ENCODE measurements at regions of chr1 and their contacts with region 1.

Region 1: DNA sequence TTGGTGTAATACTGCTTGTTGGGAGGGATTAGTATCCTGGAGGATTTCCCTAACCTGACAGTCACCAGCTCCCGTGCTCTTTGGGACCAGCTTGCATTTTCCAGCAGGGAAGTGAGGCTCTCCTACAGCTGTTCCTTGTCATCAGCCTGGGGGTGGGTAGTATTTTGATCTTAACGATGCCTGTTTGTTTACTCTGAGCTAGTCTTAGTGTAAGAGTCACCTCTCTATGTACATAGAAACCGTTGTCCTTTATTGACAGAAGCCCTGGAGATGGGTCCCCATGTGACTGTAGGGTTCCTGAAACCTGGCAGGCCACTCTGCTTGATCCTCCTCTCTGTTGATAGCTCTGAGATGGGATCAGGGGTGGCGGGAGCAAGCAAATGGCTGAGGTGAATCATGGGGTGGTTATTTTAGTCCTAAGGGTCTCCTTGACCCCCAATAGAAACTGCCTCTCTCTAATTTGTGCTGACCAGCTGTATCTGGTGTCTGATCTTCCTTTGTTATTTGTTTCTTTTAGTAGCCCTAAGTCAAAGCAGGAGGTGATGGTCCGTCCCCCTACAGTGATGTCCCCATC is 57.9 kb downstream of the ACP6 start:
- DNase-seq: peak; percentile 59
- H3K4me3 ChIP-seq: no peak overlapping the region
- H3K27ac ChIP-seq: peak overlapping the region; percentile 49 to 50
- H3K4me1 ChIP-seq: peaks cover 3% of the 10 kb centered on the region
- H3K27me3 ChIP-seq: no peaks in the 10 kb centered on the region
- CTCF ChIP-seq: peak in 1 of 4 experiments; percentile 10
- POLR2A ChIP-seq: no peak

Region 2: GRCh38 chr1:147633762-147634161 is 21.3 kb after region 1 on chr1:
- intact Hi-C with region 1: loop called (anchors 1 kb)
- DNase-seq: no peak
- H3K4me3 ChIP-seq: no peak overlapping the region
- H3K27ac ChIP-seq: no peak overlapping the region
- H3K4me1 ChIP-seq: no peaks in the 10 kb centered on the region
- H3K27me3 ChIP-seq: no peaks in the 10 kb centered on the region
- CTCF ChIP-seq: no peak
- POLR2A ChIP-seq: no peak

Region 3: DNA sequence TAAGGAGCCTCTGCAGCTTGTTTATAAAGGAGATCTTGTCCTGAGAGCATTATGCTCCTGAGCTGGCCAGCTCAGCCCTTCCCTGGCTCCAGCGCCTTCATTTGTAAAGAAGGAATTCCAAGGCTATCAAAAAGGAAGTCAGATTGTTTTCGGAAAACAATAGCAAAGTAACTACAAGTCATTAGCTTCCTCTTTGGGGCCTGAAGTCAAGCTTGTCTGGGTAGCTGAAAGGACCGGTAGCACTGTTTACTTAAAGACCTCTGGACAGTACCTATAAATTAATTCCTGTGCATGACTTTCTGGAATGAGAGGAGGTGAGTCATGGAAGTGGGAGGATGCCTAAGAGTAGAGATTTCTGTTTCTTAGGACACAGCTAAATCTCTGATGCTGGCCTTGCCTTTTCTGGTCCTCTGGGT is 168.6 kb after region 1 on chr1:
- intact Hi-C with region 1: no loop called
- DNase-seq: no peak
- H3K4me3 ChIP-seq: no peak overlapping the region
- H3K27ac ChIP-seq: no peak overlapping the region
- H3K4me1 ChIP-seq: no peaks in the 10 kb centered on the region
- H3K27me3 ChIP-seq: no peaks in the 10 kb centered on the region
- CTCF ChIP-seq: no peak
- POLR2A ChIP-seq: no peak